Activated CD4-positive, alpha-beta memory T cell treated with anti-CD3 and anti-CD28 coated beads, Interleukin-2, amount 10 ng/mL, durations not matched to agents 7 days and 5 days (primary cell): ENCODE measurements at regions of chr3 and their contacts with region 1.

Region 1: GRCh38 chr3:132522353-132522752 is 74.7 kb upstream of the ACKR4 start:
- DNase-seq: no peak
- H3K4me3 Mint-ChIP-seq: peak overlapping the region; percentile 38
- H3K27ac Mint-ChIP-seq: peak overlapping the region; percentile 36
- H3K4me1 Mint-ChIP-seq: peaks cover 13% of the 10 kb centered on the region
- H3K27me3 Mint-ChIP-seq: no peaks in the 10 kb centered on the region

Region 2: GRCh38 chr3:132535575-132536441 is 13.5 kb after region 1 on chr3:
- CTCF ChIA-PET with region 1: interaction called, 23 read pairs
- POLR2A ChIA-PET with region 1: no interaction called
- DNase-seq: peak; percentile 51
- H3K4me3 Mint-ChIP-seq: no peak overlapping the region
- H3K27ac Mint-ChIP-seq: no peak overlapping the region
- H3K4me1 Mint-ChIP-seq: peaks cover 3% of the 10 kb centered on the region
- H3K27me3 Mint-ChIP-seq: no peaks in the 10 kb centered on the region